ENCODE measurements at regions of chr11 and their contacts with region 1.

Region 1: GRCh38 chr11:79440441-79441194 is at the start of gene TENM4:
- DNase-seq: peak in 1 of 2 donors; percentile 19
- ATAC-seq: peak; percentile 27 to 38
- H3K4me3 ChIP-seq: peak within 1 kb of the TSS; percentile 51 to 65 (median 58)
- H3K27ac ChIP-seq: peak within 1 kb of the TSS in 1 of 4 donors; percentile 56
- H3K4me1 ChIP-seq: peaks cover 19 to 30% of the 10 kb centered on the region in 2 donors
- H3K27me3 ChIP-seq: peaks cover 63 to 76% (median 64%) of the 10 kb centered on the region in 3 donors
- CTCF ChIP-seq: no peak
- POLR2A ChIP-seq: peak in 1 of 2 donors; percentile 20
- total RNA-seq, gene TENM4: 0.02 to 0.82 (median 0.23) TPM

Region 2: GRCh38 chr11:79244241-79244772 is 196.3 kb before region 1 on chr11:
- in situ Hi-C with region 1: no loop called
- intact Hi-C with region 1: loop called (anchors 10 kb)
- DNase-seq: peak in 1 of 2 donors; percentile 34
- ATAC-seq: peak; percentile 82 to 83
- H3K4me3 ChIP-seq: no peak overlapping the region
- H3K27ac ChIP-seq: peak overlapping the region in 3 of 4 donors; percentile 25 to 54 (median 42)
- H3K4me1 ChIP-seq: no peaks in the 10 kb centered on the region
- H3K27me3 ChIP-seq: no peaks in the 10 kb centered on the region
- CTCF ChIP-seq: no peak
- POLR2A ChIP-seq: no peak

Region 3: DNA sequence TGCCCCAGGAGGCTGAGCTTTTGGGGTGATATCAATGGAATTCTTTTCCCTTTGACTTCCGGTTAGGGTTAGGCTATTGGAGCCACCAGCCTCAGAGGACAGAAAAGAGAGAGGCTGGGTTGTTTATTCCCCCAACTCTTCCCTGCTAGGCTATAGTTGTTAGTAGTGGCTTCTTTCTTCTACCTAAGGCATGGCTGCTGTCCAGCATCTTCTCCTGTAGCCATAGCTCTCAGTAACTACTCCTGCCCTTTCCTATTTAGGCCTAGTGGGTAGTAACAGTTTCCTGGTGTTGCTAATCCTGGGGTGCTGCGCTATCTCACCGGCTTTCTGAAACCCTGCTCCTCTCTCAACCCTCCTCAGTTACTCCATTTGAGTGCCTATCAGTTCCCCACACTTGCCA is 184.7 kb before region 1 on chr11:
- in situ Hi-C with region 1: no loop called
- intact Hi-C with region 1: no loop called
- DNase-seq: no peak
- ATAC-seq: no peak
- H3K4me3 ChIP-seq: no peak overlapping the region
- H3K27ac ChIP-seq: no peak overlapping the region
- H3K4me1 ChIP-seq: no peaks in the 10 kb centered on the region
- H3K27me3 ChIP-seq: no peaks in the 10 kb centered on the region
- CTCF ChIP-seq: no peak
- POLR2A ChIP-seq: no peak

Region 4: DNA sequence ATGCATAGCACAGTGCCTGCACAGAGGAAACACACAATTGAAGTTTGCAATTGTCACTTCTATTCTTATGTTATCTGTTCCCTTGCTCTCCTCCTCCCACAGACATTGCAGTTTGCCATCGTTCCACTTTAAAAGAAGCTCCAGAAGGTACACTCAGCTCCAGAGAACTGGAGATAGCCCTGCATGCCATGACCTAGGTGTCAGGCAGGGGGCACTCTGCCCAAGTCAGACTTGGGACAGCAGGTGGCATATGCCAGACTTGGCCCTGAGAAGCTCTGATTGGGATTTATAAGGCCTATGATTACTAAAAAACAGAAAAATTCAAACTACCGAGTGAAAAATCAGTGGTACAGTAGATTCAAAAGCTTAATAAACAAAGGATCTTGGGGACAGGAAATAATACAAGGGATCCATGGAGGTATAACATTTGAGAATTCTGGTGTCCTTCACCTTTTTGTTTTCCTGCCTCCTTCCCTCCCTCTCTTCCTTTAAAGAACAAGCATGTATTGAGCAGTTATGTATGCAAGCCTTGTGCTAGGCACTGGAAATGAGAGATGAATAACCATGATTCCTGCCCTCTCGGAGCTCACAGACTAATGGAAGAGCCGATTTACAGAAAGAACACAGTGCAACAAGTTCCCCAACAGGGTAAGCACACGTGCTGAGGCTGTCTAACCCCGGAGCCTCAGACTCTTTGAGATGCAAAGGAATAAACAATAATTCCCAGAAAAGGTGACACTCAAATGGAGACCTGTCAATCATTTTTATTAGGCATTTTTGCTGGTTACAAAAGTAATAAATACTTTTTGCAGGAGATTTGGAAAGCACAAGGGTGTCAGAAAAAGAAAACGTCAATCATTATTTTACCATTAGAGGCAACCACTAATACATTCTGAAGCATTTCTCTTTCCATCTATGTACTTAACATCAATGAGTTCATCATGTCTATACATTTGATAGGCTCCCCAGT is 39.6 kb before region 1 on chr11:
- in situ Hi-C with region 1: no loop called
- intact Hi-C with region 1: loop called (anchors 5 kb)
- DNase-seq: no peak
- ATAC-seq: no peak
- H3K4me3 ChIP-seq: no peak overlapping the region
- H3K27ac ChIP-seq: no peak overlapping the region
- H3K4me1 ChIP-seq: no peaks in the 10 kb centered on the region
- H3K27me3 ChIP-seq: no peaks in the 10 kb centered on the region
- CTCF ChIP-seq: peak in 2 of 5 experiments; percentile 34 to 44
- POLR2A ChIP-seq: no peak

Region 5: DNA sequence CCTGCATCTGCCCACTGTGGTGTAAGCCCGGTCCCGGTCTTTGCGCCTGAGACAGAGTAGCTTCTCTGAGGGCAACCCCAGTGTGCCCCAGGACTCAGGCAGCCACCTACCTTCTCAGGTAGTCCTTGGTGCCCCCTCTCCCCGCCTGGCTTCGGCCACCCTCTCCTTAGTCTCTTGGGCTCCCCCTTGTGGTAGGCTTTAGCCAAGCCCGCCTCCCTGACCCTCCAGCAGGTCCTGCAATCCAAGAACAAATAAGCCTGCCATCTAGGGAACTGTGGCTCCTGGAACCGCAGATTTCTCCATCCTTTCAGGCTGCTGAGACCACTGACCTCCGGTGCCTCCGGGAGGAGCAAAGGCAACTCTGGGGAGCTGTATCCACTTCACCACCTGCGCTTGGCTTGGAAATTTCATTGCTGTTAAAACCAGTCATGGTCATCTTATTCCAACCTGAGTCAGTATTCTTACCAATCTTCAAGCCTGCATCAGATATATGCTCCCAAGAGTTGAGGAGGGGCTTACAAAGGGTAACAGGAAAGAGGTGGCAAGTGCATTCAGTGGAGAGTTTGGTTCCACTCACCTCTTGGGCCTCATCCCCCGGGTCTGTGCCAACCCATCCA is 53.0 kb after region 1 on chr11:
- in situ Hi-C with region 1: no loop called
- intact Hi-C with region 1: no loop called
- DNase-seq: peak; percentile 11 to 33
- ATAC-seq: peak in 1 of 2 donors; percentile 56
- H3K4me3 ChIP-seq: no peak overlapping the region
- H3K27ac ChIP-seq: no peak overlapping the region
- H3K4me1 ChIP-seq: no peaks in the 10 kb centered on the region
- H3K27me3 ChIP-seq: no peaks in the 10 kb centered on the region
- CTCF ChIP-seq: peak; percentile 45 to 81 (median 67)
- POLR2A ChIP-seq: no peak

Region 6: DNA sequence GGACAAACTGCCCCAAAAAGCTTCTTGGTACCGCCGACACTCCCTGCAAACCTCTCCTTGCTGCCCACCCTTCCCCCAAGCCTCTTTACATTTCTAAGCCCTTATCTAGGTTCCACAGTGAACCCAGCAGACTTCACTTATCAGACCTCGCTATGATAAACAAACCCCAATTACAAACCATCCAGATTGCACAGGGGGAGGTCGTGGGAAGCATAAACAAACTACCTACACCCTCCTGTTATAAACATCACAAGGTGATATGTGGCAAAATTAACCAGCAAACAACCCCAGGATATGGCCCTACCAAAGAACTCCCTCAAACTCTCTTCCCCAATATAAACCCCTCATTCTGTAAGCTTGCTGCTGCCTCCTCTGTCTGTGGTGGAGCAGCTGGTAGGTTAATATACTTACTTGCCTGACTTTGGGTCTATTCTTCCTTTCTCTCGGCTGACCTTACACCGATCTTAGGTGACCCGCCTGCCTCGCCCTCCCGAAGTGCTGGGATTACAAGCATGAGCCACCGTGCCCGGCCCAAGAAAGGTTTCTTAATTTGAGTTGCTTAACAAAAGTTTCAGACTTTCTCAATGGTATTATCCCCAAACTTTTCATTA is 66.2 kb after region 1 on chr11:
- in situ Hi-C with region 1: no loop called
- intact Hi-C with region 1: no loop called
- DNase-seq: no peak
- ATAC-seq: no peak
- H3K4me3 ChIP-seq: no peak overlapping the region
- H3K27ac ChIP-seq: no peak overlapping the region
- H3K4me1 ChIP-seq: peaks cover 0 to 4% of the 10 kb centered on the region in 2 donors
- H3K27me3 ChIP-seq: no peaks in the 10 kb centered on the region
- CTCF ChIP-seq: no peak
- POLR2A ChIP-seq: no peak